Panc1 (cell line): ENCODE measurements at regions of chr6 and their contacts with region 1.

Region 1: GRCh38 chr6:137165375-137166246 is 7.8 kb downstream of the IL22RA2 start:
- DNase-seq: no peak
- ATAC-seq: no peak
- H3K4me3 ChIP-seq: no peak overlapping the region
- H3K27ac ChIP-seq: no peak overlapping the region
- H3K4me1 ChIP-seq: no peaks in the 10 kb centered on the region
- H3K27me3 ChIP-seq: no peaks in the 10 kb centered on the region
- CTCF ChIP-seq: peak; percentile 52

Region 2: GRCh38 chr6:137094411-137095008 is 71.1 kb before region 1 on chr6:
- CTCF ChIA-PET with region 1: interaction called, 10 read pairs
- POLR2A ChIA-PET with region 1: no interaction called
- in situ Hi-C with region 1: no loop called
- intact Hi-C with region 1: loop called (anchors 2 kb)
- DNase-seq: peak; percentile 46
- ATAC-seq: no peak
- H3K4me3 ChIP-seq: no peak overlapping the region
- H3K27ac ChIP-seq: no peak overlapping the region
- H3K4me1 ChIP-seq: no peaks in the 10 kb centered on the region
- H3K27me3 ChIP-seq: no peaks in the 10 kb centered on the region; the same call in 1 of the 2 replicates
- CTCF ChIP-seq: peak; percentile 80; the same call in 1 of the 2 replicates

Region 3: DNA sequence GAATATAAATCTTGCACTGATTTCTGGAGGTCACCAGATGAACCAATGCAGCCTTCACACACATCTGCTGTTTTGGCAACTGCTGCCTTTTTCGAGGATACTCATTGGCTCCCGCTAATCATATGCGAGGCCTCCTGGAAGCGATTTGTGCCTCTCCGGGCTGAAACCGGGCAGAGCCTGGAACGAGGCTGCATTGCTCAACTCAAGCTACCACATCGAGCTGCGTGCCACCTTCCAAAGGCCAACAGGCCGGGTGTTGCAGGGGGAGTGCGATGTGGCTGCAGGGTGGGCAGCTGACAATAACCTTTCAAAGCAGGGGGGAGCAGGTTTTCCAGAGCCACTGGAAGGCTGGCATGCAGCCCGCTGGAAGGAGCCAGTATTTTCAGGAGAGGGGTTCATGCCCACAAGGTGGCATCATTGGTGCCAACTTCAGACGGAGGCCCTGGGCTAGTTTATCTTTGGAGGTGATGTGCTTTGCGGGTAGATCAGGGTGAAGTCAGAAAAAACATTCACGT is 176.1 kb after region 1 on chr6:
- CTCF ChIA-PET with region 1: no interaction called
- POLR2A ChIA-PET with region 1: no interaction called
- in situ Hi-C with region 1: no loop called
- intact Hi-C with region 1: no loop called
- DNase-seq: no peak
- ATAC-seq: peak; percentile 68
- H3K4me3 ChIP-seq: no peak overlapping the region
- H3K27ac ChIP-seq: no peak overlapping the region
- H3K4me1 ChIP-seq: no peaks in the 10 kb centered on the region; the same call in 1 of the 2 replicates
- H3K27me3 ChIP-seq: peaks cover 33% of the 10 kb centered on the region
- CTCF ChIP-seq: peak; percentile 49